ENCODE measurements at regions of chr11 and their contacts with region 1.

Region 1: GRCh38 chr11:113314389-113315301 is at the start of gene TTC12:
- DNase-seq: peak; percentile 81 to 95 (median 89)
- ATAC-seq: peak; percentile 100
- H3K4me3 ChIP-seq: peak within 1 kb of the TSS; percentile 78
- H3K4me3 Mint-ChIP-seq: peak within 1 kb of the TSS; percentile 77 to 93 (median 88)
- H3K27ac ChIP-seq: peak within 1 kb of the TSS; percentile 91
- H3K27ac Mint-ChIP-seq: peak within 1 kb of the TSS; percentile 75 to 95 (median 92)
- H3K4me1 ChIP-seq: peaks cover 10 to 16% of the 10 kb centered on the region in 2 donors
- H3K4me1 Mint-ChIP-seq: peaks cover 18 to 58% (median 49%) of the 10 kb centered on the region in 7 donors
- H3K27me3 ChIP-seq: no peaks in the 10 kb centered on the region
- H3K27me3 Mint-ChIP-seq: peaks cover 0 to 3% (median 0%) of the 10 kb centered on the region in 5 donors
- total RNA-seq, gene TTC12: 14.1 to 84.5 (median 58.2) TPM

Region 2: GRCh38 chr11:111378861-111379601 is 1935.6 kb before region 1 on chr11 and contains the start of gene POU2AF1:
- CTCF ChIA-PET with region 1: no interaction called
- POLR2A ChIA-PET with region 1: no interaction called
- intact Hi-C with region 1: loop called in 1 of 2 experiments (anchors 5 kb)
- DNase-seq: peak; percentile 36 to 87 (median 83)
- ATAC-seq: peak; percentile 91
- H3K4me3 ChIP-seq: peak within 1 kb of the TSS; percentile 39
- H3K4me3 Mint-ChIP-seq: peak within 1 kb of the TSS; percentile 73 to 89 (median 84)
- H3K27ac ChIP-seq: peak within 1 kb of the TSS; percentile 58
- H3K27ac Mint-ChIP-seq: peak within 1 kb of the TSS; percentile 85 to 99 (median 95)
- H3K4me1 ChIP-seq: peaks cover 0 to 19% of the 10 kb centered on the region in 2 donors
- H3K4me1 Mint-ChIP-seq: peaks cover 7 to 50% (median 42%) of the 10 kb centered on the region in 7 donors
- H3K27me3 ChIP-seq: no peaks in the 10 kb centered on the region
- H3K27me3 Mint-ChIP-seq: peaks cover 0 to 3% (median 0%) of the 10 kb centered on the region in 5 donors
- total RNA-seq, gene POU2AF1: 0.57 to 11.3 (median 4.9) TPM

Region 3: GRCh38 chr11:112024773-112025678 is 1289.6 kb before region 1 on chr11 and contains the start of gene DLAT:
- CTCF ChIA-PET with region 1: no interaction called
- POLR2A ChIA-PET with region 1: no interaction called
- intact Hi-C with region 1: loop called in 1 of 2 experiments (anchors 10 kb)
- DNase-seq: peak; percentile 66 to 87 (median 85)
- ATAC-seq: peak; percentile 95
- H3K4me3 ChIP-seq: peak within 1 kb of the TSS; percentile 100
- H3K4me3 Mint-ChIP-seq: peak within 1 kb of the TSS; percentile 97 to 100 (median 99)
- H3K27ac ChIP-seq: peak within 1 kb of the TSS; percentile 93
- H3K27ac Mint-ChIP-seq: peak within 1 kb of the TSS; percentile 96 to 100 (median 98)
- H3K4me1 ChIP-seq: peaks cover 0 to 7% of the 10 kb centered on the region in 2 donors
- H3K4me1 Mint-ChIP-seq: peaks cover 14 to 39% (median 30%) of the 10 kb centered on the region in 7 donors
- H3K27me3 ChIP-seq: no peaks in the 10 kb centered on the region
- H3K27me3 Mint-ChIP-seq: no peaks in the 10 kb centered on the region
- total RNA-seq, gene DLAT: 13.1 to 31.0 (median 17.8) TPM

Region 4: DNA sequence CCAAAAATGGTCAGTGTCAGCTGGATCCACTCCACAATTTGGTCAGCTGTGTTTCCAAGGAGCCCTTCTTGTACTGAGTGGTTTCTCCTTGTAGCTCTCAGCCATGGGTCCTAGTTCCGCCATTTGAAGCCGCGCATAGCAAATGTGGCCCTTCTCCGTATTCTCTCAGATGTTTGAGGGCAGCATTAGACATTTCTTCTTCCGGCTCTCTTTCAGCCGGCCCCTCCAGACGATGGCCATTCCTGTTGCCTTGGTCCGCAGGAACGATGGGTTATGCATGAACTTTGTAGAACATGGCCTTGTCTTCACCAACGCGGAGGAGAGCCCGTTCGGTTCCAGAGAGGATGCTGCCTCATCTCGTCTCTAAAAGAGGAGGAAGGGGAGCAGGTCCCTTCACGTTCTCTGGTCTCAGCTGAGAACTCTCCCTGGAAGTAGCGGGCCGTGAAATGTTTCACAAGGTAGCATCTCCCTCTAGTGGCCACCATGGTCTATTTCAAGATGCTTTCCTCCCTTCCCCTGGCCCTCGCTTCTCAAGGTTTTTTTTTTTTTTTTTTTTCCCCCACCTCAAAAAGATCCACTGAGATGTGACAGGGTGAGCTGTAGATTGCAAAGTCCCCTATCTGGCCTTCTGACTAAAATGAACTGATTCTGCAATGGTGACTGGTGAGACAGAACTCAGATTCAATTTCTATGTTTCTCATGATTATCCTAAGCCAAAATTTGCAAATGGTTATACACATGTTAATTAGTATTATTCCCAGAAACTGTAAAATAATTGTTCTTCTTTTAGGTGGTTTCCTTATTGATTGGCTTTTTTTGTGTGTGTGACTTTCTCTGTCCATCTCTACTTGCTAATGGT is 1034.1 kb before region 1 on chr11:
- CTCF ChIA-PET with region 1: interaction called, 3 read pairs
- POLR2A ChIA-PET with region 1: no interaction called
- intact Hi-C with region 1: loop called in 1 of 2 experiments (anchors 10 kb)
- DNase-seq: peak; percentile 27 to 81 (median 73)
- ATAC-seq: peak; percentile 95
- H3K4me3 ChIP-seq: peak overlapping the region; percentile 78
- H3K4me3 Mint-ChIP-seq: peak overlapping the region; percentile 91 to 97 (median 94)
- H3K27ac ChIP-seq: peak overlapping the region; percentile 31
- H3K27ac Mint-ChIP-seq: peak overlapping the region; percentile 46 to 86 (median 66)
- H3K4me1 ChIP-seq: no peaks in the 10 kb centered on the region
- H3K4me1 Mint-ChIP-seq: peaks cover 7 to 36% (median 10%) of the 10 kb centered on the region in 7 donors
- H3K27me3 ChIP-seq: no peaks in the 10 kb centered on the region
- H3K27me3 Mint-ChIP-seq: no peaks in the 10 kb centered on the region

Region 5: GRCh38 chr11:113773416-113774173 is 458.9 kb after region 1 on chr11 and contains the start of gene ZW10:
- CTCF ChIA-PET with region 1: interaction called, 3 read pairs
- POLR2A ChIA-PET with region 1: no interaction called
- intact Hi-C with region 1: loop called (anchors 1 kb)
- DNase-seq: peak; percentile 86 to 92 (median 91)
- ATAC-seq: peak; percentile 99
- H3K4me3 ChIP-seq: peak within 1 kb of the TSS; percentile 86
- H3K4me3 Mint-ChIP-seq: peak within 1 kb of the TSS; percentile 92 to 100 (median 98)
- H3K27ac ChIP-seq: peak within 1 kb of the TSS; percentile 81
- H3K27ac Mint-ChIP-seq: peak within 1 kb of the TSS; percentile 89 to 97 (median 95)
- H3K4me1 ChIP-seq: peaks cover 0 to 4% of the 10 kb centered on the region in 2 donors
- H3K4me1 Mint-ChIP-seq: peaks cover 19 to 39% (median 30%) of the 10 kb centered on the region in 7 donors
- H3K27me3 ChIP-seq: no peaks in the 10 kb centered on the region
- H3K27me3 Mint-ChIP-seq: peaks cover 0 to 10% (median 0%) of the 10 kb centered on the region in 5 donors
- total RNA-seq, gene ZW10: 5.0 to 19.0 (median 10.2) TPM

Region 6: GRCh38 chr11:114400217-114400914 is 1085.7 kb after region 1 on chr11 and contains the starts of genes C11orf71 and RBM7:
- CTCF ChIA-PET with region 1: no interaction called
- POLR2A ChIA-PET with region 1: no interaction called
- intact Hi-C with region 1: loop called (anchors 1 to 10 kb)
- DNase-seq: peak; percentile 94 to 97 (median 95)
- ATAC-seq: peak; percentile 96
- H3K4me3 ChIP-seq: peak within 1 kb of the TSS; percentile 93
- H3K4me3 Mint-ChIP-seq: peak within 1 kb of the TSS; percentile 89 to 99 (median 97)
- H3K27ac ChIP-seq: peak within 1 kb of the TSS; percentile 96
- H3K27ac Mint-ChIP-seq: peak within 1 kb of the TSS; percentile 96 to 100 (median 99)
- H3K4me1 ChIP-seq: peaks cover 25% of the 10 kb centered on the region in 2 donors
- H3K4me1 Mint-ChIP-seq: peaks cover 33 to 77% (median 68%) of the 10 kb centered on the region in 7 donors
- H3K27me3 ChIP-seq: no peaks in the 10 kb centered on the region
- H3K27me3 Mint-ChIP-seq: no peaks in the 10 kb centered on the region
- total RNA-seq, gene C11orf71: 6.0 to 19.1 (median 17.1) TPM
- total RNA-seq, gene RBM7: 35.8 to 71.3 (median 43.4) TPM